ENCODE measurements at regions of chr7 and their contacts with region 1.

Region 1: DNA sequence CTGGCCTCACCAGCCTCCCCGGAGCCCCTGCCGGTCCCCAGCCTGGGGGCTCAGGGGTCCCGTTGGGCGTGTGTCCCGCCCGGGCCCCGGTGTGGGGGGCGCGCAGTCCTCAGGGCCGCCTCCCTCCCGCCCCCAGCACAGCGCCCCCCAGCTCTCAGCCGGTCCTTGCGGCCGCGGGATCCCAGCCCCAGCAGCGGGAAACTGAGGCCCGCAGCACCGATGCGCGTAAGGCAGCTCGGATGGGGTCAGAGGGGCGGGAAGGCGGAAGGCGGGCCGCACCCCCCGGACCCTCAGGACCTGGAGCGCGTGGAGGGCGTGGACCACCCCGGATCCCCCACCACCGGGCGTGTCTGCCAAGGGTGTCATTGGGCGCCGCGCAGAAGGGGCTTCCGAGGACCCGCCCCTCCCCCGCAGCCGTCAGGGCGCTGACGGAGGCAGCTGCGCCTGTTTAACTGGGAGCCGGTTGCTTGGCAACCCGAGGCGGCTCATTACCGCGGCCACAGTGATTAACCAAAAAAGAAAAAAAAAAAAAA is 14.9 kb downstream of the UNCX start:
- DNase-seq: peak in 1 of 2 donors; percentile 53
- ATAC-seq: peak in 2 of 3 donors; percentile 58 to 60
- H3K4me3 ChIP-seq: no peak overlapping the region
- H3K4me3 Mint-ChIP-seq: peak overlapping the region; percentile 55
- H3K27ac ChIP-seq: no peak overlapping the region
- H3K27ac Mint-ChIP-seq: peak overlapping the region in 1 of 2 donors; percentile 48
- H3K4me1 ChIP-seq: peaks cover 8% of the 10 kb centered on the region
- H3K4me1 Mint-ChIP-seq: peaks cover 4 to 17% of the 10 kb centered on the region in 2 donors
- H3K27me3 ChIP-seq: peaks cover 54% of the 10 kb centered on the region
- H3K27me3 Mint-ChIP-seq: peaks cover 55 to 61% of the 10 kb centered on the region in 2 donors
- CTCF ChIP-seq: no peak

Region 2: GRCh38 chr7:1231214-1232102 is 16.1 kb before region 1 on chr7:
- intact Hi-C with region 1: loop called (anchors 2 kb)
- DNase-seq: no peak
- ATAC-seq: no peak
- H3K4me3 ChIP-seq: no peak overlapping the region
- H3K4me3 Mint-ChIP-seq: peak overlapping the region; percentile 67
- H3K27ac ChIP-seq: no peak overlapping the region
- H3K27ac Mint-ChIP-seq: peak overlapping the region; percentile 55 to 69
- H3K4me1 ChIP-seq: peaks cover 25% of the 10 kb centered on the region
- H3K4me1 Mint-ChIP-seq: peaks cover 19 to 24% of the 10 kb centered on the region in 2 donors
- H3K27me3 ChIP-seq: peaks cover 56% of the 10 kb centered on the region
- H3K27me3 Mint-ChIP-seq: peaks cover 47 to 50% of the 10 kb centered on the region in 2 donors
- CTCF ChIP-seq: no peak

Region 3: GRCh38 chr7:2529161-2530070 is 1281.8 kb after region 1 on chr7:
- intact Hi-C with region 1: loop called (anchors 10 kb)
- DNase-seq: peak; percentile 71 to 83
- ATAC-seq: peak; percentile 55 to 75 (median 59)
- H3K4me3 ChIP-seq: peak overlapping the region; percentile 10
- H3K4me3 Mint-ChIP-seq: peak overlapping the region; percentile 82
- H3K27ac ChIP-seq: peak overlapping the region; percentile 94
- H3K27ac Mint-ChIP-seq: peak overlapping the region; percentile 90 to 97
- H3K4me1 ChIP-seq: peaks cover 72% of the 10 kb centered on the region
- H3K4me1 Mint-ChIP-seq: peaks cover 26 to 51% of the 10 kb centered on the region in 2 donors
- H3K27me3 ChIP-seq: no peaks in the 10 kb centered on the region
- H3K27me3 Mint-ChIP-seq: no peaks in the 10 kb centered on the region
- CTCF ChIP-seq: no peak

Measured in natural killer cell (primary cell).